Activated CD8-positive, alpha-beta T cell treated with anti-CD3 and anti-CD28 coated beads, Interleukin-2, amount 10 ng/mL, durations not matched to agents 7 days and 5 days (primary cell): ENCODE measurements at regions of chr20 and their contacts with region 1.

Region 1: DNA sequence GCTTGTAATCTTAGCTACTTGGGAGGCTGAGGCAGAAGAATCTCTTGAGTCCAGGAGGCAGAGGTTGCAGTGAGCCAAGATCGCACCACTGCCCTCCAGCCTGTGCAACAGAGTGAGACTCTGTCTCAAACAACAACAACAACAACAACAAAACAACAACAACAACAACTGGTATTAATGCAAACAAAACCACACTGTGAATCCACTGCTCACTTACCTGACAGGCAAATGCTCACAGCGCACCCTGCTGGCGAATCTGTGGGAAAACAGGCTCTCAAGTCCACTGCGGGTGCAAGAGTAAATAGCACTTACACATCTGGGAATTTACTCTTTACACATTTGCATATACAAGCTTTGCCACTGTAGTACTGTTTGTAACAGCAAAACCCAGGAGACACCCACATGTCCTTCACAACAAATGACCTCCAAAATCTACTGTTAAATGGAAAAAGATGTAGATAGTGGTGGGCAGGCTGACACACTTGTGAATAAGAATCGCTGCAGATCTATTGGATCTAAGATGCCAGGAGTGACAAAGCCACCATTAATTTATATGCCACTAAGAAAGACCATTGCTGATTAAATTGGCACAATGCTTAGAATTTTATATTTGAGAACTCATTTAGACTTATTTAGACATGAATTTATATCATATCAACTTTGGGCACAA is 29.3 kb downstream of the NSFL1C start:
- DNase-seq: peak; percentile 87
- ATAC-seq: no peak
- H3K4me3 Mint-ChIP-seq: no peak overlapping the region
- H3K27ac Mint-ChIP-seq: no peak overlapping the region
- H3K4me1 Mint-ChIP-seq: peaks cover 39% of the 10 kb centered on the region
- H3K27me3 Mint-ChIP-seq: peaks cover 20% of the 10 kb centered on the region

Region 2: GRCh38 chr20:1299522-1299921 is 137.8 kb before region 1 on chr20:
- CTCF ChIA-PET with region 1: interaction called, 10 read pairs
- POLR2A ChIA-PET with region 1: no interaction called
- DNase-seq: peak; percentile 49
- ATAC-seq: peak; percentile 26
- H3K4me3 Mint-ChIP-seq: peak overlapping the region; percentile 43
- H3K27ac Mint-ChIP-seq: peak overlapping the region; percentile 92
- H3K4me1 Mint-ChIP-seq: peaks cover 32% of the 10 kb centered on the region
- H3K27me3 Mint-ChIP-seq: no peaks in the 10 kb centered on the region

Region 3: DNA sequence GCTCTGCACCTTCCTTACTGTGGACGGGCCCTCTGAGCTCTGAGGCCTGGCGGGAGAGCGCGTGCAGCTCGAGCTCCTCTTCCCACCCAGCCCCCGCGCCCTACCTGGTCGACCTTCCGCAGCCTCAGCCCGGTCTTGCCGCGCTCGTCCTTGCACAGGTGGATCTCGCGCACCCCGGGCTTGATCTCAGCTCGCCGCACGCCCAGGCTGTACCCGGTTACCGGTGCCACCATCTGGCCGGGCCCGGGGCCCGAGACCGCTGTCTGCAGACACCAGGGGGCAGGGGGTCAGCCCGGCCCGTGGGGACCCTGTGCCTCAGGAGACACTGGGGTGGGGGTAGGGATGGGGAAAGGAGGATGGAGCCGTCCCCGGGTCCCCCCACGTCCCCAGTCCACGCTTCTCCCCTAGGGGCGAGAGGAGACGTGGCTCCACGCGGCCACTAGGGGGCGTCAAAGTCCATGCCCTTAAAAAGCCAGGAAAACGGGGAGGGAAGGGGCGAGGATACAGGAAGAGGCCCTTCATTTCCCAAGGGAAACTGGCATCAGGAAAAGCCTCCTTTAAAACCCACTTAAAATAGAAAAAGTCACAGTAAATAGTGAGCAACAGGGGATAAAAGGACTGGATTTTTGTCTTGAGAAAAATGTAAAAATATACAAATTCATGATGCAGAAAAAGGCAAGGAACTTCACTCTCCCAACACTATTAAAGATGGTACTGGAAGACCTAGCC is 124.0 kb before region 1 on chr20:
- CTCF ChIA-PET with region 1: interaction called, 20 read pairs
- POLR2A ChIA-PET with region 1: no interaction called
- DNase-seq: peak; percentile 66
- ATAC-seq: peak; percentile 62
- H3K4me3 Mint-ChIP-seq: no peak overlapping the region
- H3K27ac Mint-ChIP-seq: no peak overlapping the region
- H3K4me1 Mint-ChIP-seq: peaks cover 18% of the 10 kb centered on the region
- H3K27me3 Mint-ChIP-seq: peaks cover 6% of the 10 kb centered on the region

Region 4: GRCh38 chr20:1392823-1393506 is 44.4 kb before region 1 on chr20 and contains the start of gene FKBP1A:
- CTCF ChIA-PET with region 1: interaction called, 45 read pairs
- POLR2A ChIA-PET with region 1: no interaction called
- DNase-seq: peak; percentile 93
- ATAC-seq: peak; percentile 84
- H3K4me3 Mint-ChIP-seq: peak within 1 kb of the TSS; percentile 88
- H3K27ac Mint-ChIP-seq: peak within 1 kb of the TSS; percentile 91
- H3K4me1 Mint-ChIP-seq: peaks cover 71% of the 10 kb centered on the region
- H3K27me3 Mint-ChIP-seq: peaks cover 18% of the 10 kb centered on the region
- total RNA-seq, gene FKBP1A: 288 to 291 TPM

Region 5: GRCh38 chr20:1450926-1451491 is 13.6 kb after region 1 on chr20:
- CTCF ChIA-PET with region 1: interaction called, 12 read pairs
- POLR2A ChIA-PET with region 1: interaction called, 3 read pairs
- DNase-seq: no peak
- ATAC-seq: no peak
- H3K4me3 Mint-ChIP-seq: no peak overlapping the region
- H3K27ac Mint-ChIP-seq: no peak overlapping the region
- H3K4me1 Mint-ChIP-seq: no peaks in the 10 kb centered on the region
- H3K27me3 Mint-ChIP-seq: no peaks in the 10 kb centered on the region

Region 6: GRCh38 chr20:1466211-1467081 is 29.1 kb after region 1 on chr20 and contains the start of gene NSFL1C:
- CTCF ChIA-PET with region 1: interaction called, 29 read pairs
- POLR2A ChIA-PET with region 1: interaction called, 3 read pairs
- DNase-seq: peak; percentile 96
- ATAC-seq: peak; percentile 97
- H3K4me3 Mint-ChIP-seq: peak within 1 kb of the TSS; percentile 81
- H3K27ac Mint-ChIP-seq: peak within 1 kb of the TSS; percentile 75
- H3K4me1 Mint-ChIP-seq: peaks cover 45% of the 10 kb centered on the region
- H3K27me3 Mint-ChIP-seq: peaks cover 17% of the 10 kb centered on the region
- total RNA-seq, gene NSFL1C: 60.5 to 67.8 TPM